ENCODE measurements at regions of chr7 and their contacts with region 1.

Region 1: DNA sequence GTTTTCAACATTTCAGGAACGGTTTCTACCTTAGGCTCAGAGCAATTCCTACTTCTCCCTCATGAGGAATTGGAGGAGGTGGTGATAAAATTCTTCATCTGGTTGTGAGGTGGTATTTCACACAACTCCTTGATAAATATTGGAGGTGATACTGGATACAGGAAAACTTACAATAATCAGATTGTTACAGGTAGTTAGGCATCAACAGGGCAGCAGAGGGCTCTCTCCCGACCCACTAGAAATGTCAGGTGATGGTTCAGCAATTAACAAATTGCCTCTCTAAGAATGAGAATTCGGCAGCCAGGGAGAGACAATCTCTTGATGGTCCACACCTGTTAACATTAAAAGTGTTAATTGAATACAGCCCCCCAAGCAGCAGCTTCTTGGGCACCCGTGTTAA is 22.6 kb downstream of the ZNF786 start:
- H3K4me3 Mint-ChIP-seq: no peak overlapping the region
- H3K27ac Mint-ChIP-seq: no peak overlapping the region
- H3K4me1 Mint-ChIP-seq: peaks cover 23% of the 10 kb centered on the region
- H3K27me3 Mint-ChIP-seq: no peaks in the 10 kb centered on the region

Region 2: GRCh38 chr7:149005241-149006050 is 62.4 kb before region 1 on chr7:
- intact Hi-C with region 1: loop called (anchors 1 kb)
- H3K4me3 Mint-ChIP-seq: no peak overlapping the region
- H3K27ac Mint-ChIP-seq: no peak overlapping the region
- H3K4me1 Mint-ChIP-seq: no peaks in the 10 kb centered on the region
- H3K27me3 Mint-ChIP-seq: no peaks in the 10 kb centered on the region

Region 3: GRCh38 chr7:149028346-149029109 is 39.3 kb before region 1 on chr7 and contains the start of gene PDIA4:
- intact Hi-C with region 1: loop called (anchors 1 kb)
- H3K4me3 Mint-ChIP-seq: peak within 1 kb of the TSS; percentile 96
- H3K27ac Mint-ChIP-seq: peak within 1 kb of the TSS; percentile 97
- H3K4me1 Mint-ChIP-seq: peaks cover 35% of the 10 kb centered on the region
- H3K27me3 Mint-ChIP-seq: peaks cover 5% of the 10 kb centered on the region

Region 4: GRCh38 chr7:149046416-149046815 is 21.5 kb before region 1 on chr7:
- intact Hi-C with region 1: loop called (anchors 2 kb)
- H3K4me3 Mint-ChIP-seq: peak overlapping the region; percentile 17
- H3K27ac Mint-ChIP-seq: peak overlapping the region; percentile 85
- H3K4me1 Mint-ChIP-seq: peaks cover 27% of the 10 kb centered on the region
- H3K27me3 Mint-ChIP-seq: peaks cover 1% of the 10 kb centered on the region

Region 5: DNA sequence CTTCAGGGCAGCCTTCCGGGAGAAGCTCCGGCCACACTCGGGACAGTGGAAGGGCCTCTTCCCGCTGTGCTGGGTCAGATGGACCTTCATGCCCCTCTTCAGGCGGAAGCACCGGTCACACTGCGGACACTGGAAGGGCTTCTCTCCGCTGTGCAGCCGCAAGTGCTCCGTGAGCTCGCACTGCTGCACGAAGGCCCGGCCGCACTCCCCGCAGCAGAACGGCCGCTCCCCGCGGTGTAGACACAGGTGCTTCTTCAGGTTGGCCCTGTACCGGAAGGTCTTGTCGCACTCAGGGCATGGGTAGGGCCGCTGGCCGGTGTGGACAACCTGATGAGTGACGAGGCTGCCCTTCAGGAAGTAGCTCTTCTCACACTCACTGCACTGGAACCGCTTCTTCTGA is 36.9 kb after region 1 on chr7:
- intact Hi-C with region 1: no loop called
- H3K4me3 Mint-ChIP-seq: no peak overlapping the region
- H3K27ac Mint-ChIP-seq: no peak overlapping the region
- H3K4me1 Mint-ChIP-seq: no peaks in the 10 kb centered on the region
- H3K27me3 Mint-ChIP-seq: no peaks in the 10 kb centered on the region

Region 6: GRCh38 chr7:149180722-149181449 is 113.0 kb after region 1 on chr7:
- intact Hi-C with region 1: no loop called
- H3K4me3 Mint-ChIP-seq: no peak overlapping the region
- H3K27ac Mint-ChIP-seq: no peak overlapping the region
- H3K4me1 Mint-ChIP-seq: no peaks in the 10 kb centered on the region
- H3K27me3 Mint-ChIP-seq: no peaks in the 10 kb centered on the region